MCF 10A (cell line): ENCODE measurements at regions of chr1 and their contacts with region 1.

Region 1: DNA sequence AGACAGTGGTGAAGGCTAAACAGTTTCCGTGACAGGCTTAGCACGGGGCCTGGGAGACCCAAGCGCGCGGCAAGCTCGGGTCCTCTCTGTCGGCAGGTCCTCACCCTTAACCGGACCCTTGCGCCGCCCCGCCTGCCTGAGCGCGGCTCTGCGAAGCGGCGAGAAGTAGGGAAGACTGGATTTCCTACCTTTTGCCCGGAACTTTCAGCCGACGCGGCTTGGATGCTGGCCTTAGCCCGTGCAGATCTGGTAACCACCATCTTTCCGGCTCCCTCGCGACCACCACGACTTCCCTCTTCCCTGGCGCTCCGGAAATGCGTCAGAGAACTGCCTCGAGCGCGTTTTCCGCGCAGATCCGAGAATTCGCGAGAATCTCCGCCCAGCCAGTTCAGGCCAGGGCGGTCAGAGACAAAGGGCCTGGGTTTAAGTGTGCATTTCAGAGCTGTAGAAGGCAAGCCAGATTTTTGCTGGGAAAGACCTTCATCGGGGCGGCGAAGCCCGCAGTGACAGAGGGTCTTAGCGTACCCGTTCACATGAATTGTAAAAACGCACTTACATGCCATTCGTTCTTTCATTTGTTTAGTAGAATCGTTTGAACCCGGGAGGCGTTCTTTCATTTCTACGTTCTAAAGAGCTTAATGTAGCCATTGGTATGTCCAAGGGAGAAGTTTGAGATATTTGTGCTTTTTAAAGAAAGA is at the start of gene DNTTIP2:
- DNase-seq: peak; percentile 91
- H3K4me3 Mint-ChIP-seq: peak within 1 kb of the TSS; percentile 96
- H3K27ac Mint-ChIP-seq: peak within 1 kb of the TSS; percentile 99
- H3K4me1 Mint-ChIP-seq: peaks cover 27% of the 10 kb centered on the region
- H3K27me3 Mint-ChIP-seq: no peaks in the 10 kb centered on the region
- CTCF ChIP-seq: no peak
- total RNA-seq, gene DNTTIP2: 78.1 and 96.5 TPM in 2 replicates

Region 2: DNA sequence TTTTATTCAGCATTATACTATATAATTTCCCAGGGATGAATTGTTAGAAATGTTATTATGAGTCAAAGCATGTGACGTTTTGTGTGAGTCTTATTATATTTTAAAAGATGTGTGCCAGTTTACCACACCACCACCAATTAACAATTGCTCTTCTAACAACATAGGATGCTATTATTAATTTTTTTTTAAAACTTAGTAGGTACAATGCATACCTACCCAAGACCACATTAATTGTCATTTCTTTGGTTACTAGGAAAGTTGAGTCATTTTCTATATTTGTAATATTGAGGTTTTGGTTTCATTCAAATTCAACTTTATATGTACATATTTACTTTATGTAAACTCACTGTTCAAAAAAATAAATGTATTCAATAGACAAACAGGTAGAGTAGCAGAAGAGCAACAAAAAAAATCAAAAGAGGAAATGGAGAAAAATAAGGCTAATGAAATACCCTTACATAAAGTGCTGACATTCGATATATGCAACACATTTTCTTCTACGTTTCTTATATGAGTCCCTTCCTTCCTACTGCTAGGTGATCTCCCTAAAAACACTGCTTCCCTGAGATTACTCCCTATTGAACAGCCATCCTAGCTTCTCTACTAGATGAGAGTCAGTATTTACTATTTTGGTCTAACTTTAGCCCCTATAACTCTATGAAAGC is 20.6 kb after region 1 on chr1:
- CTCF ChIA-PET with region 1: no interaction called
- POLR2A ChIA-PET with region 1: interaction called, 14 read pairs
- intact Hi-C with region 1: no loop called
- DNase-seq: no peak
- H3K4me3 Mint-ChIP-seq: no peak overlapping the region
- H3K27ac Mint-ChIP-seq: no peak overlapping the region
- H3K4me1 Mint-ChIP-seq: no peaks in the 10 kb centered on the region
- H3K27me3 Mint-ChIP-seq: no peaks in the 10 kb centered on the region
- CTCF ChIP-seq: no peak